Right cardiac atrium (tissue), 5 donors: ENCODE measurements at regions of chr1 and their contacts with region 1.

Region 1: GRCh38 chr1:9004700-9005394 is 21.4 kb downstream of the SLC2A7 start:
- DNase-seq: peak; percentile 74 to 92 (median 90)
- ATAC-seq: peak; percentile 77 to 79
- H3K4me3 ChIP-seq: no peak overlapping the region
- H3K27ac ChIP-seq: no peak overlapping the region
- H3K4me1 ChIP-seq: no peaks in the 10 kb centered on the region
- H3K27me3 ChIP-seq: no peaks in the 10 kb centered on the region

Region 2: GRCh38 chr1:8910914-8911313 is 93.9 kb before region 1 on chr1:
- intact Hi-C with region 1: loop called in 2 of 4 experiments (anchors 5 kb)
- DNase-seq: no peak
- ATAC-seq: no peak
- H3K4me3 ChIP-seq: no peak overlapping the region
- H3K27ac ChIP-seq: no peak overlapping the region
- H3K4me1 ChIP-seq: no peaks in the 10 kb centered on the region
- H3K27me3 ChIP-seq: no peaks in the 10 kb centered on the region

Region 3: DNA sequence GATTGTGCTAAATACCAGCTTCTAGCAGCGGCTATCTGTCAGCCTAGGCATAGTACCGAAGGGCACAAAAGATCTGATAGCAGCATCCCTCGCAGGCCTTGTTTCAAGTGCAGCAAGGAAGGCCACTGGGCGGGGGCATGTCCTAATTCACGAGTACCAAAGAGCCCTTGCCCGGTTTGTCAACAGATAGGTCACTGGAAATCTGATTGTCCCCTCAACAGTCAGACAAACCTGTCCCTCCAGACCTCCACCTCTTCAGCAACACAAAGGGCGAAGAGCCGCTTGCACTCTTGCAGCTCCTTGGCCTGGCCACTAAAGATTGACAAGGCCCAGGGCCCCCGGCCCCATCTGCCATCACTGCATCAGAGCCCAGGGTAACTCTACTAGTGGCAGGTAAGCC is 81.9 kb before region 1 on chr1:
- intact Hi-C with region 1: loop called in 3 of 4 experiments (anchors 5 kb)
- DNase-seq: no peak
- ATAC-seq: no peak
- H3K4me3 ChIP-seq: no peak overlapping the region
- H3K27ac ChIP-seq: no peak overlapping the region
- H3K4me1 ChIP-seq: no peaks in the 10 kb centered on the region
- H3K27me3 ChIP-seq: no peaks in the 10 kb centered on the region

Region 4: GRCh38 chr1:9028921-9029705 is 24.3 kb after region 1 on chr1:
- intact Hi-C with region 1: no loop called
- DNase-seq: no peak
- ATAC-seq: no peak
- H3K4me3 ChIP-seq: no peak overlapping the region
- H3K27ac ChIP-seq: no peak overlapping the region
- H3K4me1 ChIP-seq: no peaks in the 10 kb centered on the region
- H3K27me3 ChIP-seq: no peaks in the 10 kb centered on the region

Region 5: DNA sequence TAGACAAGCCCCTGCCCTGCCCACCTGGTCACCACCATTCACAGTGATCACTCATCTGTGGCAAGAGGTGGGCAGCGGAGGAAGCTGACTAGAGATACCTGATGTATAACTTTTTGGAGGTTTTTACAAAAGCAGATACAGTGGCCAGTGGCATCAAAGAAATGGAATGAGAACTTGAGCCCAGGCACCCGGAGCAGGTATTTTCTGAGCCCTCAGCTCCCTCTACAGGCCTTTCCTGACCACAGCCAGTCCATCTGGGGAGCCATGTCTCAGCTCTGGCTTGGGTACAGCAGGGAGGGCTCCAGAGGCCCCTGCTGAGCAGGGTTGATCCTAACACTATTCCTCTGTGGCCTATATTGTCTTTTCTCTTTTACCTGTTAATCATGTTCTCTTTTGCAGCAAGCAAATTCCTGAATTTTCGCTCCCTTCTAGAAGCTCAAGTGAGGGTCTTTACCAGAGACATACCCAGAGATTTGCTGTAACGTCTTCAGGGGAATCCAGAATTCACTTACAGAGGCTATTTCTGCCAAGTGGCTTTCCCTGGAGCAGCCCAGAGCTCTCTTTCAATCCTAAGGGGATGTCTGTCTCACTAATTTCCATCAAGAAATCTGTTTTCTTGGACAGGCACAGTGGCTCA is 96.8 kb after region 1 on chr1:
- intact Hi-C with region 1: loop called in 2 of 4 experiments (anchors 5 to 10 kb)
- DNase-seq: peak in 1 of 3 donors; percentile 64
- ATAC-seq: peak; percentile 56 to 67
- H3K4me3 ChIP-seq: no peak overlapping the region
- H3K27ac ChIP-seq: no peak overlapping the region
- H3K4me1 ChIP-seq: no peaks in the 10 kb centered on the region
- H3K27me3 ChIP-seq: no peaks in the 10 kb centered on the region